ENCODE measurements at regions of chr6 and their contacts with region 1.

Region 1: GRCh38 chr6:36897609-36898008 is 11.9 kb downstream of the C6orf89 start:
- DNase-seq: peak; percentile 25
- ATAC-seq: no peak
- H3K4me3 ChIP-seq: no peak overlapping the region
- H3K4me3 Mint-ChIP-seq: no peak overlapping the region
- H3K27ac ChIP-seq: no peak overlapping the region
- H3K27ac Mint-ChIP-seq: no peak overlapping the region
- H3K4me1 ChIP-seq: no peaks in the 10 kb centered on the region
- H3K4me1 Mint-ChIP-seq: no peaks in the 10 kb centered on the region
- H3K27me3 ChIP-seq: no peaks in the 10 kb centered on the region
- H3K27me3 Mint-ChIP-seq: no peaks in the 10 kb centered on the region
- CTCF ChIP-seq: no peak

Region 2: GRCh38 chr6:34922177-34922663 is 1975.4 kb before region 1 on chr6:
- CTCF ChIA-PET with region 1: no interaction called
- POLR2A ChIA-PET with region 1: interaction called, 10 read pairs
- intact Hi-C with region 1: no loop called
- DNase-seq: no peak
- ATAC-seq: no peak
- H3K4me3 ChIP-seq: no peak overlapping the region
- H3K4me3 Mint-ChIP-seq: no peak overlapping the region
- H3K27ac ChIP-seq: no peak overlapping the region
- H3K27ac Mint-ChIP-seq: no peak overlapping the region
- H3K4me1 ChIP-seq: no peaks in the 10 kb centered on the region
- H3K4me1 Mint-ChIP-seq: no peaks in the 10 kb centered on the region
- H3K27me3 ChIP-seq: no peaks in the 10 kb centered on the region
- H3K27me3 Mint-ChIP-seq: no peaks in the 10 kb centered on the region
- CTCF ChIP-seq: no peak

Region 3: DNA sequence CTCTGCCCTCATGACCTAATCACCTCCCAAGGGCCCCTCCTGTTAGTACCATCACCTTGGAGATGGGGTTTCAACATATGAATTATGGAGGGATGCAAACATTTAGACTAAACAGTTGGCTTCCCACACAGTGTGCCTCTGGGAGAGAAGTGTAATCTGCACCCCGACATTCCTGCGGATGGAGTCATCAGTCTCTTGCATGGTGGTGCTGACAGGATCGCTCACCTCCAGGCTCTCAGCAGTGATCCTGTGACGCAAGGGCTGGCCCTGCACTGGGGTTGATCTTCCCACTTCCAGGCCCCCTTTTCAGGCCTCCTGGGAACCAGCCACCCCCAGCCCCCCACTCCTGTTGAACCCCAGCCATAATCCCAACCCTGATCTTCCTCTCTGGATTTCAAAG is 40.9 kb after region 1 on chr6:
- CTCF ChIA-PET with region 1: no interaction called
- POLR2A ChIA-PET with region 1: no interaction called
- intact Hi-C with region 1: no loop called
- DNase-seq: no peak
- ATAC-seq: no peak
- H3K4me3 ChIP-seq: no peak overlapping the region
- H3K4me3 Mint-ChIP-seq: no peak overlapping the region
- H3K27ac ChIP-seq: no peak overlapping the region
- H3K27ac Mint-ChIP-seq: no peak overlapping the region
- H3K4me1 ChIP-seq: no peaks in the 10 kb centered on the region
- H3K4me1 Mint-ChIP-seq: peaks cover 4% of the 10 kb centered on the region
- H3K27me3 ChIP-seq: peaks cover 0 to 8% (median 0%) of the 10 kb centered on the region in 4 experiments
- H3K27me3 Mint-ChIP-seq: peaks cover 5% of the 10 kb centered on the region
- CTCF ChIP-seq: no peak

Measured in B cell (primary cell).